ENCODE measurements at regions of chr10 and their contacts with region 1.

Region 1: DNA sequence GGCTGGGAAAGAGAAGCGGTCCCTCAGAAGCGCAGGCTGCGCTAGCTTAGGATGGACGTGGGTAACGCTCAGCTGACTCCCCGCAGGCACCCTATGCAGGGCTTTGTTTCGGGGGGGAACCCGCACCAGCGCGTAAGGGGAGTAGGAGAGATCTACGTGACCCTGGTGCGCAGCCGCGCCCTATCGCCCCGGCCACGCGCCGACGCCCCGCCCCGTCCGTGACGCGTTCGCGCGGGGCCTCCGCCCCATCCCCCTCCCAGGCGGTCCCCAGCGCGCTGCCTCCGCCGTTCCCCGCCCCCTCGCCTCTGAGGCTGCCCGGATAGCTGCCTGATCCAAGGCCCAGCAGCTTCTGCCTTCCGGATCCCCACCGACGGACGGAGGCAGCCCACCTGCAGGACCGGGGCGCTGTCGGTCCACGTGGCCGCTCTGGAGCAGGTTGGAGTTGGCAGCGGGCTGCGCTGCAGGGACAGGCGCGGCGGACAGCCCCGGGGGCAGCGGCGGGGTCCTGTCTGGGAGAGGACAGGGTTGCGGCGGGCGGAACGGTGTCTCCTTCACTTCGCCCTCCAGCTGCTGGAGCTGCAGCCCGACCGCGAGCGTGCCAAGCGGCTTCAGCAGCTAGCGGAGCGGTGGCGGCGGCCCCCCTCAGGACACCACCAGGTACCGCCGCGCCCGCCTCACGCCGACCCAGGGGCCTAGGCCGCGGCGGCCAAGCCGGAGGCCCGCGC is at the start of gene VDAC2:
- DNase-seq: peak; percentile 88 to 99 (median 93)
- ATAC-seq: peak; percentile 87 to 94 (median 92)
- H3K4me3 ChIP-seq: peak within 1 kb of the TSS; percentile 91 to 94
- H3K4me3 Mint-ChIP-seq: peak within 1 kb of the TSS; percentile 90 to 100 (median 98)
- H3K27ac ChIP-seq: peak within 1 kb of the TSS; percentile 99
- H3K27ac Mint-ChIP-seq: peak within 1 kb of the TSS; percentile 100
- H3K4me1 ChIP-seq: peaks cover 14 to 33% of the 10 kb centered on the region in 2 experiments
- H3K4me1 Mint-ChIP-seq: peaks cover 31 to 34% (median 32%) of the 10 kb centered on the region in 3 donors
- H3K27me3 ChIP-seq: no peaks in the 10 kb centered on the region
- H3K27me3 Mint-ChIP-seq: no peaks in the 10 kb centered on the region
- total RNA-seq, gene VDAC2: 82.8 to 111 (median 86.8) TPM

Region 2: DNA sequence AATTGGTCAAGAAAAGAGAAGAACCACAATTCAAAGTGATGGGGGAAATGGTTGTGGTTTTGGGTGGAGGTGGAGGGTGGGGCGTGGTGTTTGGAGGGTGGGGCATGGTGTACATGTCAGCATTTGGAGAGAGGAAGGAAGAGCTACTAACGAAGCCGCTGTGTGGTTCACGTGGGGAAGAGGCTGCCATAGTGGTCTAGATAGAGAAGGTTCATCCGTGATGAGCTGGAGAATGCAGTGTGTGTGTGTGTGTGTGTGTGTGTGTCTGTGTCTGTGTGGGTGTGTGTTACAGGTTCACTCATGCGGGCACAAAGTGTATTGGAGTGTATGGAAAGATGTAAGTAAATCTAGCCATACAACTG is 1218.6 kb before region 1 on chr10:
- CTCF ChIA-PET with region 1: no interaction called
- POLR2A ChIA-PET with region 1: interaction called in 1 of 2 experiments, 13 read pairs
- DNase-seq: peak; percentile 52 to 88 (median 82)
- ATAC-seq: peak; percentile 100
- H3K4me3 ChIP-seq: no peak overlapping the region
- H3K4me3 Mint-ChIP-seq: peak overlapping the region in 2 of 3 donors; percentile 7 to 29
- H3K27ac ChIP-seq: peak overlapping the region; percentile 49
- H3K27ac Mint-ChIP-seq: peak overlapping the region; percentile 16 to 51
- H3K4me1 ChIP-seq: peaks cover 10 to 33% of the 10 kb centered on the region in 2 experiments
- H3K4me1 Mint-ChIP-seq: peaks cover 28 to 40% (median 37%) of the 10 kb centered on the region in 3 donors
- H3K27me3 ChIP-seq: no peaks in the 10 kb centered on the region
- H3K27me3 Mint-ChIP-seq: no peaks in the 10 kb centered on the region

Region 3: DNA sequence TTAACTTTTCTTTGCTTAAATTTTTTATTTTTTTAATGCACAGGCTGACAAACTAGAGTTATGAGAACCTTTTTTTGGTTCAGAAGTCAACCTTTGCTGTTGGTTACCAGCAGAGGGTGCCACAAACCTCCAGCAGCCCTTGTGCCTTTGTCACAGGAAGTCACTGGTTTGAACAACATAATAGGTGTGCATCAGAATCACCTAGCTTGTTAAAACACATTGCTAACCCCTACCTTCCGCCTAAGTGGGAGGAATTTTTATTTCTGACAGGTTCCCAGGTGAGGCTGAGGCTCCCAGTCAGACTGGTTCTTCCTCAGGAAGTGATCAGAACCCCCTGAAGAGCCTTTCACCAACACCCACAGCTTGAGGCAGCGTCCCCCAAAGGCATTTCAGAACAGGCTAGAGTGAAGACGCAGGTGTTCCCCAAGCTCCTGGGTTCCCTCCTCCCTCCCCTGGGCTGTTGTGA is 22.4 kb before region 1 on chr10:
- CTCF ChIA-PET with region 1: interaction called, 7 to 48 read pairs
- POLR2A ChIA-PET with region 1: interaction called, 7 to 8 read pairs
- DNase-seq: peak; percentile 36 to 88 (median 69)
- ATAC-seq: peak; percentile 93 to 99 (median 95)
- H3K4me3 ChIP-seq: no peak overlapping the region
- H3K4me3 Mint-ChIP-seq: peak overlapping the region in 1 of 3 donors; percentile 13
- H3K27ac ChIP-seq: peak overlapping the region; percentile 61
- H3K27ac Mint-ChIP-seq: peak overlapping the region; percentile 91 to 93
- H3K4me1 ChIP-seq: peaks cover 4 to 10% of the 10 kb centered on the region in 2 experiments
- H3K4me1 Mint-ChIP-seq: peaks cover 6 to 8% (median 6%) of the 10 kb centered on the region in 3 donors
- H3K27me3 ChIP-seq: no peaks in the 10 kb centered on the region
- H3K27me3 Mint-ChIP-seq: no peaks in the 10 kb centered on the region

Region 4: GRCh38 chr10:75223507-75223906 is 13.1 kb after region 1 on chr10:
- CTCF ChIA-PET with region 1: interaction called in 1 of 2 experiments, 74 read pairs
- POLR2A ChIA-PET with region 1: interaction called, 6 to 11 read pairs
- DNase-seq: no peak
- ATAC-seq: no peak
- H3K4me3 ChIP-seq: no peak overlapping the region
- H3K4me3 Mint-ChIP-seq: no peak overlapping the region
- H3K27ac ChIP-seq: no peak overlapping the region
- H3K27ac Mint-ChIP-seq: peak overlapping the region; percentile 62 to 81
- H3K4me1 ChIP-seq: peaks cover 0 to 14% of the 10 kb centered on the region in 2 experiments
- H3K4me1 Mint-ChIP-seq: peaks cover 53 to 63% (median 55%) of the 10 kb centered on the region in 3 donors
- H3K27me3 ChIP-seq: no peaks in the 10 kb centered on the region
- H3K27me3 Mint-ChIP-seq: no peaks in the 10 kb centered on the region

Region 5: DNA sequence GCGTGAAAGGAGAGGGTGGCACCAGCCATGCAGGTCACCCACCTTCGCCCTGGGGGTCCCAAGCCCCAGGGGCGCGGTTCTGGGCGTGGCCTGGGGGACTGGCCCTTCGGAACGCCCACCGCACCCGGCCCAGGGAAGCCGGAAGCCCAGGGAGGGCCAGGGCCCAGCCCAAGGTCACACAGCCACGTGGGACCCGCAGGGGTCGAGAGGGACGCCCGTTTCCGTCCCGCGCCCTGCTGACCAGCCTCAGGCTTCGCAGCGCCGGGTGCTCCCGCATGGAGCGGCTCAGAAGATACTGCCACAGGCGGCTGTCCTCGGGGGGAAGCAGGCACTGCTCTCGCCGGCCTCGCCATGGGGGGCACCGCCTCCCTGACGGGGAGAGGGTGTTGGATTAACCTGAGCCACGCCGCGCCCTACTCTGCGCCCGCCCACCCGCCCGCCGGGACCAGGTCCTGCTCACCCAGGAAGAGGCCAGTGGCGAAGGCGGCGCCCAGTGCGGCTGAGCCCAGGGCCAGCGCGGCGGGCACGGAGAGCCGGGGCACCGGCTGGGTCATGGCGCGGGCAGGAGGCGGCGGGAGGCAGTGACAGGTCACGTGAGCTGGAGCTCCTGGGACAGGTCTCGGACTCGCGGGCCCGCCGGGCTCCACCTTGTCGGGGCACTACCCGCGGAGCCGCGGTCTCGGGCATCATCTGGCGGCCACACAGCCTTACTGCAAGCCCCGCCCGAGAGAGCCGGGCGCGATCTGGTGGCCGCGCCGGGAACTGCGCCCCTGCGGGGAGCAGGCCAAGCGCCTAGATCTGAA is 25.1 kb after region 1 on chr10 and contains the start of gene COMTD1:
- CTCF ChIA-PET with region 1: interaction called, 4 to 74 read pairs
- POLR2A ChIA-PET with region 1: interaction called, 9 read pairs
- DNase-seq: peak; percentile 77 to 95 (median 89)
- ATAC-seq: peak; percentile 68 to 74 (median 70)
- H3K4me3 ChIP-seq: peak within 1 kb of the TSS; percentile 79 to 82
- H3K4me3 Mint-ChIP-seq: peak within 1 kb of the TSS; percentile 72 to 83 (median 79)
- H3K27ac ChIP-seq: peak within 1 kb of the TSS; percentile 63
- H3K27ac Mint-ChIP-seq: peak within 1 kb of the TSS; percentile 86 to 99
- H3K4me1 ChIP-seq: peaks cover 0 to 27% of the 10 kb centered on the region in 2 experiments
- H3K4me1 Mint-ChIP-seq: peaks cover 16 to 27% (median 16%) of the 10 kb centered on the region in 3 donors
- H3K27me3 ChIP-seq: no peaks in the 10 kb centered on the region
- H3K27me3 Mint-ChIP-seq: no peaks in the 10 kb centered on the region
- total RNA-seq, gene COMTD1: 11.2 to 39.0 (median 33.8) TPM

Region 6: GRCh38 chr10:75261813-75262708 is 51.6 kb after region 1 on chr10:
- CTCF ChIA-PET with region 1: no interaction called
- POLR2A ChIA-PET with region 1: no interaction called
- DNase-seq: no peak
- ATAC-seq: no peak
- H3K4me3 ChIP-seq: no peak overlapping the region
- H3K4me3 Mint-ChIP-seq: no peak overlapping the region
- H3K27ac ChIP-seq: no peak overlapping the region
- H3K27ac Mint-ChIP-seq: no peak overlapping the region
- H3K4me1 ChIP-seq: no peaks in the 10 kb centered on the region
- H3K4me1 Mint-ChIP-seq: no peaks in the 10 kb centered on the region
- H3K27me3 ChIP-seq: peaks cover 0 to 4% of the 10 kb centered on the region in 2 experiments
- H3K27me3 Mint-ChIP-seq: peaks cover 2 to 3% of the 10 kb centered on the region in 2 donors

Measured in T-cell (primary cell).